IMR-90 (cell line): ENCODE measurements at regions of chr9 and their contacts with region 1.

Region 1: GRCh38 chr9:115591584-115591984 is 473.6 kb upstream of the TNC start:
- DNase-seq: peak; percentile 100
- ATAC-seq: peak; percentile 61
- H3K4me3 ChIP-seq: no peak overlapping the region
- H3K27ac ChIP-seq: peak overlapping the region; percentile 87
- H3K4me1 ChIP-seq: peaks cover 24% of the 10 kb centered on the region
- H3K27me3 ChIP-seq: no peaks in the 10 kb centered on the region
- CTCF ChIP-seq: peak; percentile 96
- POLR2A ChIP-seq: peak; percentile 65
- RAD21 ChIP-seq: peak; percentile 100

Region 2: DNA sequence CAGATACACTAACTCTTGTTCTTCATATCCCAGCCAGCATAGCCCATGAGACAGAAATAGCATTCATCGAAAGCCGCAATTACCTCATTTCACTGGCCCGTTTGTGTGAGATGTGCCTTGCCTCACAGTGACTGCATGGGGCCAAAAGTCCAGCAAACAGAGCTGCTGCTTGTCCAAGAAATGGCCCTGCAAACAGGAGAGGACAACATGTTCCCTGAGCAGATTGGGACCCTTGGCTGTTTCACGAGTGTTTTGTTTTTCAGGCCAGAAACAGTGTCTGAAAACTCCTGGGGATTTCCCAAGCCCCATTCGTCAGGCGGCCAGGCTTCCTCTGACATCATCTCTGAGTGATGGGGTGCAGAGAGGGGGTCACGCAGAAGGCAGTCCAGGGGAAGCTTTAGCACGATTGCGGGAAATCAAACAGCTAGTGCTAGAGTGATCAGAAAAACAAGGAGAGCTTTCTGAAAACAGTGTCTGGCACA is 58.4 kb after region 1 on chr9:
- CTCF ChIA-PET with region 1: interaction called, 3 read pairs
- POLR2A ChIA-PET with region 1: no interaction called
- dilution Hi-C with region 1: no loop called
- in situ Hi-C with region 1: no loop called
- intact Hi-C with region 1: loop called (anchors 2 kb)
- DNase-seq: peak; percentile 99
- ATAC-seq: peak; percentile 75
- H3K4me3 ChIP-seq: no peak overlapping the region
- H3K27ac ChIP-seq: peak overlapping the region; percentile 86
- H3K4me1 ChIP-seq: peaks cover 12% of the 10 kb centered on the region
- H3K27me3 ChIP-seq: no peaks in the 10 kb centered on the region
- CTCF ChIP-seq: no peak
- POLR2A ChIP-seq: peak; percentile 44
- RAD21 ChIP-seq: peak; percentile 35; the same call in 1 of the 2 replicates

Region 3: DNA sequence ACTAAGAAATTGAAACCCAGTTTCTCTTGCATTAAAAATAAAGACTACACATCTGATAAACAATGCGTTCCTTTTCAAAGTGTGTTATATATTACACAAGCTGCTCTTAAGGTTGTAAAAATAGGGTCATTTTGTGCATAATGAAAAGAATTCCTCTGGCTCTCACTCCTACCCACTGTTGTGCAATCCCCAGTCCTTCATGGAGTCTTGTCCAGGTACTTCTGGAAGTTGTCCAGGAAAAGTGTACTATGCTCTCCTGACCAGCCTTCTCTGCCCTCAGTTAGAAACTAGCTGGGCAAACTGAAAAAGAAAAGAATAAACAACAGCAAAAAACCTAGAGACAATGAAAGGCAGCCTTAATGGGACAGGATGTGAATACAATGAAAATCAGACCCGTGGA is 216.5 kb after region 1 on chr9:
- CTCF ChIA-PET with region 1: no interaction called
- POLR2A ChIA-PET with region 1: no interaction called
- dilution Hi-C with region 1: no loop called
- in situ Hi-C with region 1: no loop called
- intact Hi-C with region 1: loop called (anchors 5 kb)
- DNase-seq: no peak
- ATAC-seq: no peak
- H3K4me3 ChIP-seq: no peak overlapping the region
- H3K27ac ChIP-seq: no peak overlapping the region
- H3K4me1 ChIP-seq: peaks cover 6% of the 10 kb centered on the region
- H3K27me3 ChIP-seq: no peaks in the 10 kb centered on the region
- CTCF ChIP-seq: no peak
- POLR2A ChIP-seq: no peak
- RAD21 ChIP-seq: no peak

Region 4: GRCh38 chr9:115944166-115944948 is 352.8 kb after region 1 on chr9:
- CTCF ChIA-PET with region 1: no interaction called
- POLR2A ChIA-PET with region 1: no interaction called
- dilution Hi-C with region 1: no loop called
- in situ Hi-C with region 1: no loop called
- intact Hi-C with region 1: loop called (anchors 1 kb)
- DNase-seq: peak; percentile 100
- ATAC-seq: peak; percentile 87
- H3K4me3 ChIP-seq: no peak overlapping the region
- H3K27ac ChIP-seq: peak overlapping the region; percentile 96
- H3K4me1 ChIP-seq: peaks cover 25% of the 10 kb centered on the region
- H3K27me3 ChIP-seq: no peaks in the 10 kb centered on the region
- CTCF ChIP-seq: no peak
- POLR2A ChIP-seq: peak; percentile 65
- RAD21 ChIP-seq: peak; percentile 32; the same call in 1 of the 2 replicates

Region 5: GRCh38 chr9:116208417-116209232 is 617.0 kb after region 1 on chr9:
- CTCF ChIA-PET with region 1: interaction called, 8 read pairs
- POLR2A ChIA-PET with region 1: no interaction called
- dilution Hi-C with region 1: no loop called
- in situ Hi-C with region 1: no loop called
- intact Hi-C with region 1: loop called (anchors 1 kb)
- DNase-seq: peak; percentile 76
- ATAC-seq: peak; percentile 63
- H3K4me3 ChIP-seq: no peak overlapping the region
- H3K27ac ChIP-seq: peak overlapping the region; percentile 39; the same call in 1 of the 2 replicates
- H3K4me1 ChIP-seq: peaks cover 2% of the 10 kb centered on the region; the same call in 1 of the 2 replicates
- H3K27me3 ChIP-seq: no peaks in the 10 kb centered on the region
- CTCF ChIP-seq: peak; percentile 37
- POLR2A ChIP-seq: no peak
- RAD21 ChIP-seq: peak; percentile 50

Region 6: GRCh38 chr9:116646661-116647512 is 1055.3 kb after region 1 on chr9:
- CTCF ChIA-PET with region 1: interaction called, 5 read pairs
- POLR2A ChIA-PET with region 1: no interaction called
- dilution Hi-C with region 1: no loop called
- in situ Hi-C with region 1: loop called (anchors 10 kb)
- intact Hi-C with region 1: loop called (anchors 1 kb)
- DNase-seq: peak; percentile 61
- ATAC-seq: peak; percentile 80
- H3K4me3 ChIP-seq: no peak overlapping the region
- H3K27ac ChIP-seq: no peak overlapping the region
- H3K4me1 ChIP-seq: peaks cover 4% of the 10 kb centered on the region
- H3K27me3 ChIP-seq: no peaks in the 10 kb centered on the region
- CTCF ChIP-seq: peak; percentile 72
- POLR2A ChIP-seq: no peak
- RAD21 ChIP-seq: peak; percentile 79